Right ventricle myocardium superior (tissue), 1 donor: ENCODE measurements at regions of chr12 and their contacts with region 1.

Region 1: DNA sequence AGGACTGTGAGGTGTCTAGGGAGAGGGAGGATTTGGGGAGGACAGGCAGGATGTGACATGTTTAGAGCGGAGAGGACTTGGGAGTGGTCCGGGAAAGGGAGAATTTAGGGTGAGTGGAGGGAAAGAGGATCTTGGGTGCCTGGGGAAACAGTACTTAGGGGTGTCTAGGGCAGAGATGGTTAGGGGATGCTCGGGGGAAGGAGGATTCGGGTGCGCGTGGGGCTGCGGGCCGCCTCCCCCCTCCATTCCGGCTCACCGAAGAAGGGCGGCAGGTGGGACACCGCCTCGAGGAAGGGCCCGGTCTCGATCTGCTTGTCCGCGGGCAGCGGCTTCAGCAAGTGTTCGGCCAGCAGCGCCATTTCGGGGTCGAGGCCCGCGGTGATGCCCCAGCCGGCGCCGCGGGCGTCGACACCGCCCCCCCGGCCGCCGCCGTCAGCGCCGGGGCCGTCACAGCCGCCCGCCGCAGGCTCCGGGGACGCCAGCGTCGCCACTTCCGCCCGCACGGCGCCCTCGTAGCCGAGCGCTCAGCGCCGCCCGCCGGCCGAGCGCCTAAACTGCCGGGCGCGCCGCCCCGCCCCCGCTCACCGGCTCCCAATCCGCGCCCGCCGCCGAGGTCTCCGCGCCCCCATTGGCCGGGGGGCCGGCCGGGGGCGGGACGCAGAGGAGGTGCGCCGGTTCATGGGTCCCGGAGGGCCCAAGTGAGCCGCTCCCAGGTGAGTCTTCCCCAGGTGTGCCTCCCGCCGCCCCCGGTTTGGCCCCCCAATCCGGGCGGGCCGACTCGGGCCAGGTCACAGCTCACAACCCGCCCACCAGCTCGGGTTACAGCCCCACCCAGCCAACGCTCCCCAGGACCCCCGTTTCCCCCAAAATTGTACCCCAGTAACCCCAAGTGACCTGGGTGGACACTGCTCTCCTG is at the start of gene GLTP:
- DNase-seq: peak; percentile 92
- ATAC-seq: peak; percentile 100
- total RNA-seq, gene GLTP: 18.6 TPM

Region 2: DNA sequence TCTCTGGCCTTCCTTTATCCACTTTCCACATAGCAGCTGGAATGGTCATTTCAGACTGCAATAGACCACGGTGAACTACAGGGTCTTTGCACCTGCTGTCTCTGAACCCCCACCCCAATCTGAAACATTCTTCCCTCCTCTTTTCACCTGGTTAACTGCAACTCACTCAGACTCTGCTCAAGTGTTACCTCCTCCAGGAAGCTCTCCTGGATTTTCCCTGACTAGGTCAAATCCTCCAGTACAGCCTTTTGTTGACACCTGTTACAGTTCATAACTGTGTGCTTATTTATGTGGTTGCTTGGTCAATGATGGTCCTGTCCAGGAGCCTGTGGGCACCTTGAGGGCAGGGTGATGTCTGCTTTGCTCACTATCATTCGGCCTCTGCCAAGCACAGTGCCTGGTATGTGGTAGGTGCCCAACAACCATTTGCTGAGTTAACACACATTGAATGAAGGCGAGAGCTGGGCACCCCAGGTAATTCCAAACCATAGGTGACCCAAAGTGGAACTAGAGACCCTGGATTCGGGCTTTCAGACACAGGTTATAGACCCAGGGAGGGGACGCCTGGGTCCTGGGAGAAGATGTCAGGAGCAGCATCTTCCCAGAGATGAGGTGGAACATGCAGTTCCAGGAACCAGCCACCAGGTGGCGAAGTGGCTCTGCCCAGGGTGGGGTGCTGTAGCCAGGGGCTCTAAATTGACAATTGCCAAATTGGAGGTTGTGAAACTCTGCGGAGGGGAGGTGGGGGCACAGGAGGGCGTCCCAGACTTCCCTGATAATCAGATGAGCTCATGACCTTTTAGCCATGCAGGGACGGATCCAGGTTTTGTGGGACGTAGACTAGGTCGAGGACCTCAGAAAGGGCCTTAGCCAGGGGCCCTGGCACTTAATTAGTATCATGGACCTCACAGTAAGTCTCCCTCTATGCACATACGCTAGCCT is 75.2 kb before region 1 on chr12:
- intact Hi-C with region 1: loop called (anchors 2 kb)
- DNase-seq: peak; percentile 83
- ATAC-seq: peak; percentile 88